HepG2 (cell line): ENCODE measurements at regions of chr2 and their contacts with region 1.

Region 1: GRCh38 chr2:16128746-16129610 is 188.6 kb downstream of the MYCN start:
- DNase-seq: no peak
- ATAC-seq: no peak
- H3K4me3 ChIP-seq: no peak overlapping the region
- H3K27ac ChIP-seq: no peak overlapping the region
- H3K4me1 ChIP-seq: peaks cover 15% of the 10 kb centered on the region
- H3K27me3 ChIP-seq: peaks cover 2 to 9% of the 10 kb centered on the region in 2 experiments; a peak in 3 of 5 replicates
- CTCF ChIP-seq: no peak
- EP300 ChIP-seq: no peak
- POLR2A ChIP-seq: no peak
- RAD21 ChIP-seq: no peak

Region 2: DNA sequence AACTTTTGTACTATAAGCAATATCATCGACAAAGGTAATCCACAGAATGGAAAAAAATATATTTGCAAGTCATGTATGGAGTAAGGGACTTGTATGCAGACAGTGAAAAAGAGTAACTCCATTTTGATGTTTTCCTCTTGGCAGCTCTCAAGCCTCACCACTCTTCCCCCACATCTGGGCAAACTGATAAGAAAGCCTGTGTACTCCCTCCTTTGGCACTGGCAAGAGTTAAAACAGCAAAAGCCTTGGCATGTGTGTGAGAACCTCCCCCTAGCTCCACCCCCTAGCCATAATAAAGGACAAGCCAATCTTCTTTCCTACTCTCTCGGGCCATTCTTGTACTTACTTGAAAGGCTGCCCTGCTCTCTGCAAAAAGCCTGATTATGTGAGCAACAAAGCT is 1161.2 kb before region 1 on chr2:
- CTCF ChIA-PET with region 1: no interaction called
- POLR2A ChIA-PET with region 1: no interaction called
- in situ Hi-C with region 1: no loop called
- intact Hi-C with region 1: no loop called
- DNase-seq: no peak
- ATAC-seq: no peak
- H3K4me3 ChIP-seq: no peak overlapping the region
- H3K27ac ChIP-seq: no peak overlapping the region
- H3K4me1 ChIP-seq: no peaks in the 10 kb centered on the region
- H3K27me3 ChIP-seq: no peaks in the 10 kb centered on the region; a peak in 1 of 5 replicates
- CTCF ChIP-seq: no peak
- EP300 ChIP-seq: no peak
- POLR2A ChIP-seq: no peak
- RAD21 ChIP-seq: no peak

Region 3: DNA sequence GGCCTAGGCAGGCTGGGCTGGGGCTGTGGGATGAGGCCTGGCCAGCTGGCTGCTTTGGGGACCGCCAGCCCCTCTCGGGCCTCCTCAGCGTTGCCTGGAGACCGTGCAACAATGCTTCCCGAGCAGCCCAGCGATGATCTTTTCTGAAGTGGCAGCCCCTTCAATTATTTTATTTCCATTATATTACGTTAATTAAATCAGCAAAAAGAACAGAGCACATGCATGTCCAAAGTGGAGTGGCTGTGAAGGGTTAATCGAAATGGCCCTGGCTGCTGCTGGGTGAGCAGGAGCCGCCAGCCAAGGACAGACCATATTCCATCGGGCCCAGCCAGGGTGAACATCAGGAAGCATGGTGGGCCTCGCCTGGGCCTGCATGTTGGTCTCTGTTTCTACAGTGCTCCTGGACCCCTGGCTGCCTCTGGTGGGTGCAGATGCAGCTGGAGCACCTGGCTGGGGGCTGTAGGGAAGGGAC is 56.9 kb after region 1 on chr2:
- CTCF ChIA-PET with region 1: no interaction called
- POLR2A ChIA-PET with region 1: no interaction called
- in situ Hi-C with region 1: no loop called
- intact Hi-C with region 1: loop called (anchors 2 kb)
- DNase-seq: no peak
- ATAC-seq: no peak
- H3K4me3 ChIP-seq: no peak overlapping the region
- H3K27ac ChIP-seq: no peak overlapping the region
- H3K4me1 ChIP-seq: no peaks in the 10 kb centered on the region
- H3K27me3 ChIP-seq: peaks cover 3 to 12% of the 10 kb centered on the region in 2 experiments; a peak in 3 of 5 replicates
- CTCF ChIP-seq: no peak
- EP300 ChIP-seq: no peak
- POLR2A ChIP-seq: no peak
- RAD21 ChIP-seq: no peak